ENCODE measurements at regions of chrX and their contacts with region 1.

Region 1: GRCh38 chrX:15356444-15356843 is 21.1 kb upstream of the PIGA start:
- DNase-seq: no peak
- H3K4me3 ChIP-seq: no peak overlapping the region
- H3K27ac ChIP-seq: no peak overlapping the region
- H3K4me1 ChIP-seq: no peaks in the 10 kb centered on the region
- H3K27me3 ChIP-seq: no peaks in the 10 kb centered on the region
- CTCF ChIP-seq: no peak
- EP300 ChIP-seq: no peak
- POLR2A ChIP-seq: no peak

Region 2: DNA sequence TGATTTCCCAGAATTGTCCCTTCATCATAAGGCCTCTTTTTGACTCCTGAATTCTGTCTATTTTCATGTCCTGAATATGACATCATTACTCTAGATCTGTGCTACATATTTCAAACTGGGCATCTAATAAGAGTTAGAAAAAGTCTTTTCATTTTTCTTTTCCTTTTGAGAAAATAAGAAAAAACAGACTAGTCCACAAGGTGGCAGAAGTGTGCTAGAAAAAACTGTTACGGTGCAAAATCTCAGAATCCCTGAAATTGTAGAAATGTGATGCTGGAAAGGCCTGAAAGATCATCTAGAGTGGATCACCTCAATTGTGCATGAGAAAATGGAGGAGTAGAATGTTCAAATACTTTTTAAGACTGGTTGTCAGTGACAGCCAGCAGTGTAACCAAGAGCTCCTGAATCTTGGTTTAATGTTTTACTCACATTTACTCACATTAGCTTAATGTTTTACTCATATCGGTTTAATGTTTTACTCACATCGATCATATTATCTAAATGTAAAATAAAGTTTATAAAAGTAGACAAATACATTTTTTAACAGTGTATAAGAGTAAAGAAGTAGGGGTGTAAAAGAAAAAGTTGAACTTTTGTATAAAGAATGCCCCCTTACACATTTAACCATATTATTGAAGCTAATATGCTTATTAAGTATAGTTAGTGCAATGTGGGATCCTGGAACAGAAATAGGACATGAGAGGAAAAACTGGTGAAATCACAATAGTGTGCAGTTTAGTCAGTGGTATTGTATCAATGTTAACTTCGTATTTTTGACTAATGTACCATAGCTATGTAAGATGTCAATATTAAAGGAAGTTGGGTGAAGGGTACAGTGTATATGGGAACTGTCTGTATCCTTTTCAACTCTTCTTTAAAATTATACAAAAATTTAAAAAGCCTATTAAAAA is 56.2 kb before region 1 on chrX:
- intact Hi-C with region 1: loop called in 1 of 4 experiments (anchors 10 kb)
- DNase-seq: no peak
- H3K4me3 ChIP-seq: no peak overlapping the region
- H3K27ac ChIP-seq: no peak overlapping the region
- H3K4me1 ChIP-seq: no peaks in the 10 kb centered on the region
- H3K27me3 ChIP-seq: no peaks in the 10 kb centered on the region
- CTCF ChIP-seq: peak in 1 of 3 donors; percentile 46
- EP300 ChIP-seq: no peak
- POLR2A ChIP-seq: no peak

Region 3: DNA sequence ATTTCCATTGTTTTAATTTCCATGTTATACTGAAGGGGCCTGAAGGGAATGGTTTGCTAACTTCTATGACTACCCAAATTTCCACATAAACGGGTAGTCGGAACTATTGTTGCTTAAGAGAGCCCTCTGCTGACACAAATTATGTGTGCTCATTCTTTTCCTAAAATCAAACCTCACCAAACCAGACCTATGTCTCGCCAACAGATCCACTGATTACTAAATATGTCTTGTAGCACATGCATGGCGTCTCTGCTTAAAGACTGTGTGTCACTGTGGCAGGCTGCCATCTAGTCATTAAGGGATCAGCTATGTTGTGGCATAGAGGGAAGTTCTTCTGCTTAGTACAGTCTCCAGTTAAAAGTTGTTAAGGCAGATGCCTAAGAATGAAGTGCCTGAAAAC is 111.6 kb after region 1 on chrX:
- intact Hi-C with region 1: loop called in 2 of 4 experiments (anchors 5 to 10 kb)
- DNase-seq: peak in 1 of 5 donors; percentile 34
- H3K4me3 ChIP-seq: no peak overlapping the region
- H3K27ac ChIP-seq: peak overlapping the region in 1 of 2 donors; percentile 21
- H3K4me1 ChIP-seq: no peaks in the 10 kb centered on the region
- H3K27me3 ChIP-seq: no peaks in the 10 kb centered on the region
- CTCF ChIP-seq: peak in 2 of 3 donors; percentile 46 to 60
- EP300 ChIP-seq: no peak
- POLR2A ChIP-seq: no peak

Measured in ovary (tissue), 10 donors.